Head of caudate nucleus (tissue), 42 donors: ENCODE measurements at regions of chr7 and their contacts with region 1.

Region 1: GRCh38 chr7:37420946-37421695 is 27.5 kb downstream of the ELMO1 start:
- DNase-seq: peak in 6 of 42 donors; percentile 22 to 65 (median 30)

Region 2: DNA sequence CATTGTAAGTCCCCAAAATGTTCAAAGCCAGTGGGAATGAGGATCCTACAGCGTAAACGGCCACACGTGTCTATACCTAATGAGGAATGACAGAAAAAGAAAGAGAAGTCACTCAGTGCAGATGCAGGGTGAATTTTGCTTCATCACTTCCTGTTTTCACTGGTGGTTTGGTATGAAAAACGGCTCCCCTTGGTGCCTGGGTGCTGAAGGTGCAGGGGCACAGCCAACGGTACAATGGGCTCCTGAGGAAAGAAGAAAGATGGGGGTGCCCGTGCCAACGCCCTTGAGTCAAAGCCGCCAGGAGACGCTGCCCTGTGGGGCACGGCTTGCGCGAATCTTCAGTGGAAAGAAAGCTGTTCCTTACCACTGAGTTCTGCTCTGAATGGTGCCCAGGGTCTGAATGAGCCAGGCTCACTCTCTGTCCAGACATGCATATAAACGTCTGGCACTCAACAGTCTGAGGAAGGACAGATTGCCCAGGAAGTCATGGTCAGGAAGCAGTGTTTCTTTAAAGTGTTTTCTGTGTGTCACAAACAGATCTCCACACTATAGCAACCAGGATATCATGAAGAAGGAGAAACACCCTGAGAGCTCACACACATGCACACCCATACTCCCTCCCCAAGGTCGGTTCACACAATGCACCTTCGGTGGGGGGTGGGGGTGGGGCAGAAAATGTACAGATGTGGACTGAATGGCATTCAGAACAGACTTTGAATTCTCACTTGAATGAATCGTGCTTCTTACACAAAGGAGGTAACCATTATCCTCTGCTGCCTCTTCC is 78.2 kb before region 1 on chr7:
- intact Hi-C with region 1: loop called (anchors 10 kb)
- DNase-seq: peak in 3 of 42 donors; percentile 8 to 16 (median 15)